ENCODE measurements at regions of chr13 and their contacts with region 1.

Region 1: DNA sequence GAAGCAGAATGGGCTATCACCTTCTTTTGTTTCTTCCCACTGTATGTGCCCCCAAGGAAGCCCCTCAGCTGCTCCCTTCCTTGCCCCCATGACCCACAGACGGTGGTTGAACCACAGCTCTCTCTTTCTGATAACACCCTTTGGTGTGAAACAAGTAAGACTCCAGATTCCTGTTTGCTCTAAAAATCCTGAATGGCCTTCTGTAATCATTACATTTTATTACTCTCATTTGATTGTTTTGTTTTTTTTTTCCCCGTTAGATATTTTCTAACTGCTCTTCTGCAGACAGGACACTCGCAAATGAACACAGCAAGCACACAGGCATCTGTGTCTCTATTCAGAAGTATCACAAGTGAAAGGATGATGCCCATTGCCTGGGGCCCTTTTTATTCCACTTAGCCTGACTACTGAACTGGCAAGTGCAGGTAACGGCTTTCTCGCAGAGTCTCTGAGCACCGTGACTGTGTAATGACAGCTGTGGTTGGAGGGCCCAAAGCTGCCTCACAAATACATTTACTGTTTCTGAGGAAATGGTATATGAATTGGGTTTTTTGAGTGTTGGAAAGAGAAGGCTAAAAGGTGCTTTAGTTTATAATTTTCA is 59.3 kb downstream of the OXGR1 start:
- DNase-seq: no peak

Region 2: DNA sequence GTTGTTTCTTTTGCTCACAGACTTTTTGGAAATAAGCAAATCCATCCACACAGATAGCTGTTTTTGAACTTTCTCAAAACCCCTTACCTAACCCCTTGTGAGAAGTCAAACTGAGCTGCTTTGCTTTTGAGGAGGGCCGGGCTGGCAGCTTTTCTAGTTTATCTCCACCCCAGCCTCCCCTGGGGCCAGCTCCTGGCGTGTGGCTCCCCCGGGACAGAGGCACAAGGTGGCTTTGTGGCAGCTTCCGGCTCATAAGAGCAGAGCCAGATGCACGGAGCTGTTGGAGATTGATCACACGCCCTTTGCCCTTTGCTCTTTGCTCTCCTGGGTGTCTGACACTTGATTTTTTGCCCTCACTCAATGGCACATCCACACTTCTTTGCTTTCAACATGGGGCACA is 1267.0 kb after region 1 on chr13:
- intact Hi-C with region 1: loop called in 1 of 2 experiments (anchors 5 kb)
- DNase-seq: no peak

Measured in posterior vena cava (tissue), 2 donors.